Psoas muscle (tissue), 8 donors: ENCODE measurements at regions of chr9 and their contacts with region 1.

Region 1: DNA sequence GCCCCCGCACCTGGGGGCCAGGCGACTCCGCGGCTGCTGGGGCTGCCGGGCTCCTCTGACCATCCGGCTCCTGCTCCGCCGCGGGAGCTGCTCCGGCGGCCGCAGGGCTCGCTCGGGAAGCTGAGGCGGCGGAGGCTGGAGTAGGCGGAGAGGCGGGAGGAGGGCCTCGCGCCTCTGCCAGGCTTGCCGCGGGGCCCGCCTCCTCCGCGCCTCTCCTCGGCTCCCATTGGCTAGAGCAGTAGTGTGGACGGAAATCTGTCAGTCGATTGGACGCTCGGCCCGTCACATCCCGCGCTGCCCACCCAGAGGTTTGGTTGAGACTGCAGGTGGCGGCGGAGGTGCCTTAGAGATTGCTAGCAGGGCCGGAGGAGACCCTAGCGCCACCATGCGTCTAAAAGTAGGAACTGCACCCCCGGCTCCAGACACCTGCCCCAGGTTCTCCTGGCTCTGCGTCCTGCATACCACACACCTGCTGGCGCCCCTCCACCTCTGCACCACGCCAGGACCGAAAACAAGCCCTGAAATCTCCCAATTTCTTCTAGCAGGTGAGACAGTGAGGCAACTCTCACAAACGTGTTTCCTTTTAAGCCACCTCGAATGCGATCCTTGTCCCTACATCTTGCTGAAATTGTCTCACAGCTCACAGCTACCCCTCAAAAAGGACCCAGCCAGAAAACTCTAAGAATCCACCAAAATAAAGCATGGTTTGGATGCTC is at the start of gene SCAI:
- DNase-seq: peak; percentile 99 to 100
- ATAC-seq: peak; percentile 99 to 100 (median 100)
- H3K4me3 ChIP-seq: peak within 1 kb of the TSS; percentile 69
- H3K27ac ChIP-seq: peak within 1 kb of the TSS; percentile 70
- H3K4me1 ChIP-seq: no peaks in the 10 kb centered on the region
- H3K27me3 ChIP-seq: no peaks in the 10 kb centered on the region
- CTCF ChIP-seq: peak; percentile 100
- total RNA-seq, gene SCAI: 1.8 to 5.2 (median 3.4) TPM

Region 2: GRCh38 chr9:124940693-124941453 is 202.7 kb before region 1 on chr9 and contains the start of gene GOLGA1:
- intact Hi-C with region 1: loop called (anchors 5 to 10 kb)
- DNase-seq: peak; percentile 97 to 98
- ATAC-seq: peak; percentile 96 to 98 (median 97)
- H3K4me3 ChIP-seq: peak within 1 kb of the TSS; percentile 86
- H3K27ac ChIP-seq: peak within 1 kb of the TSS; percentile 99
- H3K4me1 ChIP-seq: peaks cover 21% of the 10 kb centered on the region
- H3K27me3 ChIP-seq: no peaks in the 10 kb centered on the region
- CTCF ChIP-seq: no peak
- total RNA-seq, gene GOLGA1: 13.3 to 23.0 (median 17.0) TPM

Region 3: DNA sequence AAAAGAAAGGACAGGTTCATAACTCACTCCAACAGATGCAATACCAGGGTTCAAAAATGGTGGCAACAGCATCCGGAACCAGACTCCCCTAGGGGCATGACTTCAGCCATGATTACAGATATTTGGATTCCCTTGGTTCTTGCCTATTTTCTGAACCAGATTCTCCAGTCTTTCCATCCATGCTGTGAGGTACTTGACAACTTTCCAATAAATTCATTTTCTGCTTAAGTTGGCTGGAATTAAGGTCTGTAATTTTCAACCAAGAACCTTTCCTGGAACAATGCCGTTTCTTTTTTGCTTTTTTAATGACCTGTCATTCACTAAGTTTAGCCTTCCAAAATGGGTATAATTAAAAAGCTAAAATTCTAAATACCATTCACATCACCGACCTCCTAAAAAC is 52.4 kb before region 1 on chr9:
- intact Hi-C with region 1: loop called in 1 of 2 experiments (anchors 5 kb)
- DNase-seq: no peak
- ATAC-seq: no peak
- H3K4me3 ChIP-seq: no peak overlapping the region
- H3K27ac ChIP-seq: no peak overlapping the region
- H3K4me1 ChIP-seq: peaks cover 19% of the 10 kb centered on the region
- H3K27me3 ChIP-seq: no peaks in the 10 kb centered on the region
- CTCF ChIP-seq: no peak